ENCODE measurements at regions of chr22 and their contacts with region 1.

Region 1: DNA sequence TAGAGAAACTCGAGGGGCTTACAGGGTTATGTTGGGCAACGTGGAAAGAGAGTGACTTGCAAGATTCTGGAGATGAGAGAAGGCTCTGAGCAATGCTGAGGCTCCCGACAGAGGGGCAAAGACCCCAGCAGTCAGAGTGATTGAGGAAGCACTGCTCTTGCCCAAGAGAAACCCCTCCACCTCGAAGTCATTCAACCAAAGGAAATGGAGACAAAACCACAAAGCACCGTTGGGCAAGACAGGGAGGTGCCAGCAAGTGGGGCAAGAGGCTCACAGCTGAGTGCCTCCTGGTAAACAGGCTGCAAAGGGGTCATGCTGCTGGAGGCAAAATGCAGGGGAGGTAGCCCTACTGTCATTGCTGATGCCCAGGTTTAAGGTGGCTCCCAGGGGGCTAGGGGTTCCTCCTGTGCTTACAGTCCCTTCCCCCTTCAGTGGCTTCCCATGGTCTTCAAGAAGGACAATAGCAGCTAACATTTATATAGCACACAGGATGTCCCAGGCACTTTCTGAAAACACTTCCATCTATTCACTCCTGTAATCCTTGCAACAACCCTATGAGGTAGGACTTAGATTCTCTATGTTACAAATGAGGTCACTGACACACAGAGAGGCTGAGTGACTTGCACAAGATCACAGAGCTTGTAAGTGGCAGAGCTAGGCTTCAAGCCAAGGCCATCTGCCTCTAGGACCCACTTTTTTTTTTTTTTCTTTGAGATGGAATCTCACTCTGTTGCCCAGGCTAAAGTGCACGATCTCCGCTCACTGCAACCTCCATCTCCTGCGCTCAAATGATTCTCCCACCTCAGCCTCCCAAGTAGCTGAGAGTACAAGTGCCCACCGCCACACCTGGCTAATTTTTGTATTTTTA is 18.1 kb upstream of the MYH9 start:
- DNase-seq: peak; percentile 88 to 98 (median 97)
- H3K4me3 ChIP-seq: peak overlapping the region in 4 of 7 experiments; percentile 20 to 53 (median 36)
- H3K27ac ChIP-seq: peak overlapping the region; percentile 13 to 73
- H3K4me1 ChIP-seq: peaks cover 12 to 47% (median 45%) of the 10 kb centered on the region in 4 experiments
- H3K27me3 ChIP-seq: no peaks in the 10 kb centered on the region

Region 2: DNA sequence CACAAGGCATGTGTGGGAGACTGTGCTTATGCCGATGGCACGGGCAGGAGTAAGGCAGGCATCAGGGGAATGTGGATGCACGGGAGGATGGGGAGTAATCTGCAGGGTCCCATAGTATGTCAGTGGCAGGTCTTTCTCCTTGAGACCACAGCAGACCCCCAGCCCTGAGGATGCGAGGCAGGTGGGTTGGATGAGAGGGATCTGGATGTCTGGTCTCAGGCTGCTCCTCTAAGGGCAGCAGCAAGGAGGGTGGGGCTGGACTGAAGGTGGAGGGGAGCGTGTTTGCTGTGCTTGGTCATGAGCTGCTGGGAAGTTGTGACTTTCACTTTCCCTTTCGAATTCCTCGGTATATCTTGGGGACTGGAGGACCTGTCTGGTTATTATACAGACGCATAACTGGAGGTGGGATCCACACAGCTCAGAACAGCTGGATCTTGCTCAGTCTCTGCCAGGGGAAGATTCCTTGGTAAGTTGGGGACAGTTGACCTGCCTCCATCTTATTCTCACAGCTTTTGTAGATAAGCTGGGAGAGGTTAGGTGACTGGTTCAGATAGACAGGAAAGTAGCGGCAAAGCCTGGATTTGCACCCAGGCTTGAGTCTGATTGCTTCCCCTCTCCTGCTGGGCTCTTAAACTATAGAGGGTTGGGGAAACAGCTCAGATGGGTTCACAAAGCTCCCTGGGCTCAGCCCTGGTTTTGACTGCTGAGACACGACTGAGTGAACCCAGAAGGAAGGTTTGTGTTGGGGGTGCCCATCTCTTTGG is 153.0 kb before region 1 on chr22 and contains the start of gene APOL1:
- CTCF ChIA-PET with region 1: no interaction called
- POLR2A ChIA-PET with region 1: no interaction called
- DNase-seq: peak; percentile 61 to 87 (median 78)
- H3K4me3 ChIP-seq: peak within 1 kb of the TSS; percentile 51 to 97 (median 81)
- H3K27ac ChIP-seq: peak within 1 kb of the TSS; percentile 62 to 86
- H3K4me1 ChIP-seq: peaks cover 0 to 27% (median 25%) of the 10 kb centered on the region in 4 experiments
- H3K27me3 ChIP-seq: no peaks in the 10 kb centered on the region

Region 3: GRCh38 chr22:36387752-36388518 is 18.0 kb before region 1 on chr22 and contains the start of gene MYH9:
- CTCF ChIA-PET with region 1: interaction called, 9 read pairs
- POLR2A ChIA-PET with region 1: interaction called, 11 read pairs
- DNase-seq: peak; percentile 99 to 100 (median 99)
- H3K4me3 ChIP-seq: peak within 1 kb of the TSS; percentile 81 to 99 (median 91)
- H3K27ac ChIP-seq: peak within 1 kb of the TSS; percentile 64 to 80
- H3K4me1 ChIP-seq: peaks cover 5 to 61% (median 45%) of the 10 kb centered on the region in 4 experiments
- H3K27me3 ChIP-seq: no peaks in the 10 kb centered on the region

Region 4: GRCh38 chr22:36435516-36436415 is 29.9 kb after region 1 on chr22:
- CTCF ChIA-PET with region 1: no interaction called
- POLR2A ChIA-PET with region 1: no interaction called
- DNase-seq: peak in 2 of 3 donors; percentile 63 to 73
- H3K4me3 ChIP-seq: no peak overlapping the region
- H3K27ac ChIP-seq: no peak overlapping the region
- H3K4me1 ChIP-seq: peaks cover 0 to 38% (median 17%) of the 10 kb centered on the region in 4 experiments
- H3K27me3 ChIP-seq: no peaks in the 10 kb centered on the region